OCI-LY7 (cell line): ENCODE measurements at regions of chr2 and their contacts with region 1.

Region 1: DNA sequence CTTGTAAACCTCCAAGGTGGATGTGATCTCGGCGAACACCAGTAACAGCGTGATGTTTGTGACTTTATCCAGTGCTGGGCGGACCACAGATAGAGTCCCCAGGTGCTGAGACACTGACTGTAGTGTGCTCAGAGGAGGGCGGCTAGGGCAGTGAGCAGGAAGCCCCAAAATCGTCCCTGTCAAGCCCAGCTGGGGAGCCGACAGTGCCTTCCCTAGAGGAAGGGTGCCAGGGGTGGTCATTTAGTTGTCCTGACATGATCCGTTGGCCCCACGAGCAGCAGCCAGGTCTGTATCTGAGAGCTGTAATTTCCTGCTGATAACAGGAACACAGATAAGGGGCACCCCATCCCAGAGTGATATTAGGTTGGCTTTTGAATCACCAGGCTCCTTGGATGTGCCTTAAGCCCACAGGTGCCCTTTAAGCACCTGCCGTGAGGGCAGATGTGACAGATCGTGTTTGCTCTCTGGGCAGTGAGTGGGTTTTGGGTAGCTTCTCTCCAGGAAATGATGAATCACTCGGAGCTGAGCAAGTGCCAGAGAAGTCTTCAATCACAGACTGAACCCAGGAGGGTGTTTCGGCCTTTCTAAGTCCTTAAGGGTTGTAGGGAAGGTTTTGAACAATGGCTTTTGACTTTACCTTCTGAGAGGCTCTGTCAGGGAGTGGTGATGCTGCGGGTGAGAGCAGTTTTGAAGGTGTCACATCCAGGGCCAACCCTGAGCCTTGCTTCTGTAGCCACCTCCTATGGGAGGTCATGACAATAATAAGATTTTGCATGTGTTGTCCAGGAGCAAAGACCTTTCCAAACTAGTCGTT is 7.7 kb downstream of the LPIN1 start:
- DNase-seq: peak; percentile 63
- H3K4me3 ChIP-seq: peak overlapping the region; percentile 62
- H3K27ac ChIP-seq: peak overlapping the region; percentile 95
- H3K4me1 ChIP-seq: peaks cover 87% of the 10 kb centered on the region
- CTCF ChIP-seq: no peak

Region 2: GRCh38 chr2:11764359-11764758 is 10.3 kb after region 1 on chr2:
- CTCF ChIA-PET with region 1: no interaction called
- POLR2A ChIA-PET with region 1: interaction called, 11 read pairs
- intact Hi-C with region 1: no loop called
- DNase-seq: no peak
- H3K4me3 ChIP-seq: no peak overlapping the region
- H3K27ac ChIP-seq: no peak overlapping the region
- H3K4me1 ChIP-seq: no peaks in the 10 kb centered on the region
- CTCF ChIP-seq: no peak

Region 3: DNA sequence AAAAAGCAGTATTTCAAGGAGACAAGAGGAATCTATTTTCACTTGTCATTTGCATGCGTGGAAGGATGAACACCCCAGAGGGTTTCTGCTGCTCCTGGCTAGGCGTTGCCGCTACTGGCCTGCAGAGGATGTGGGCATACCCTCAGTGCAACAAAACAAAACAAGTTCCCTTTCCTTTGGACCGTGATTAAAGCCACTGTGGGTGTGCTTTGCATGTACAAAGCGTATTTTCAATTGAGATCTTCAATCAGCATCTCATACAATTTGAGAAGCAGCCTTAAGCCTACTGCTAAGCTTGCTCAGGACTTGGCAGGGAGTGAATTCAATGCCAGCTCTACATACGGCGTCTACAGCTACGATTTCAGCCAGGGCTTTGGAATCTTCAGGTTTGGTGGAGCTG is 290.8 kb after region 1 on chr2:
- CTCF ChIA-PET with region 1: no interaction called
- POLR2A ChIA-PET with region 1: interaction called, 4 read pairs
- intact Hi-C with region 1: loop called (anchors 5 kb)
- DNase-seq: peak; percentile 88
- H3K4me3 ChIP-seq: peak overlapping the region; percentile 61
- H3K27ac ChIP-seq: peak overlapping the region; percentile 90
- H3K4me1 ChIP-seq: peaks cover 84% of the 10 kb centered on the region
- CTCF ChIP-seq: 0 out of 2 replicates have a peak, but pooled peaks have one; percentile 30